Activated T-helper 1 cell treated with anti-CD3 and anti-CD28 coated beads, Interleukin-12 subunit alpha, Interleukin-12 subunit beta, Interleukin-2, Interleukin-4 antibody, amounts not matched to agents 30 ng/mL and 10 ng/mL and 1 ng/mL, durations not matched to agents 14 hours and 24 hours and 36 hours (primary cell): ENCODE measurements at regions of chr1 and their contacts with region 1.

Region 1: DNA sequence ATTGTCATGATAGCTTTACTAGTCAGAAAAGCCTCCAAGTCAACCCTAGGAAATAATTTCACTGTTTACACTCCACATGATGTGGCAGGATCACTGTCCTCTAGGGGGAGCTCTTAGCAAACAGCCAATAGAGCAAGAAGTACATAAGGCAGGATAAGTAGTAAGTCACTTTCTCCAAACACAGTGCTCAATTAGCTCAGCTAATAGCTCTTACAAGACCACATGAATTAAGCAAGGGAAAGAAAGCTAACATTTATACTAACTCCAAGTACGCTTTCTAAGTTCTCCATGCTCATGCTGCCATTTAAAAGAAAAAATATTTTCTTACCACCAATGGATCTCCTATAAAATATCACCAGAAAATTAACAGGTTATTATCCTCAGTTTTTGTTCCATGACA is 66.9 kb upstream of the LRIF1 start:
- DNase-seq: peak; percentile 49
- H3K4me3 Mint-ChIP-seq: no peak overlapping the region
- H3K27ac Mint-ChIP-seq: no peak overlapping the region
- H3K4me1 Mint-ChIP-seq: no peaks in the 10 kb centered on the region
- H3K27me3 Mint-ChIP-seq: peaks cover 18% of the 10 kb centered on the region

Region 2: GRCh38 chr1:110816930-110817329 is 213.7 kb before region 1 on chr1:
- intact Hi-C with region 1: no loop called
- DNase-seq: no peak
- H3K4me3 Mint-ChIP-seq: no peak overlapping the region
- H3K27ac Mint-ChIP-seq: no peak overlapping the region
- H3K4me1 Mint-ChIP-seq: no peaks in the 10 kb centered on the region
- H3K27me3 Mint-ChIP-seq: peaks cover 48% of the 10 kb centered on the region

Region 3: DNA sequence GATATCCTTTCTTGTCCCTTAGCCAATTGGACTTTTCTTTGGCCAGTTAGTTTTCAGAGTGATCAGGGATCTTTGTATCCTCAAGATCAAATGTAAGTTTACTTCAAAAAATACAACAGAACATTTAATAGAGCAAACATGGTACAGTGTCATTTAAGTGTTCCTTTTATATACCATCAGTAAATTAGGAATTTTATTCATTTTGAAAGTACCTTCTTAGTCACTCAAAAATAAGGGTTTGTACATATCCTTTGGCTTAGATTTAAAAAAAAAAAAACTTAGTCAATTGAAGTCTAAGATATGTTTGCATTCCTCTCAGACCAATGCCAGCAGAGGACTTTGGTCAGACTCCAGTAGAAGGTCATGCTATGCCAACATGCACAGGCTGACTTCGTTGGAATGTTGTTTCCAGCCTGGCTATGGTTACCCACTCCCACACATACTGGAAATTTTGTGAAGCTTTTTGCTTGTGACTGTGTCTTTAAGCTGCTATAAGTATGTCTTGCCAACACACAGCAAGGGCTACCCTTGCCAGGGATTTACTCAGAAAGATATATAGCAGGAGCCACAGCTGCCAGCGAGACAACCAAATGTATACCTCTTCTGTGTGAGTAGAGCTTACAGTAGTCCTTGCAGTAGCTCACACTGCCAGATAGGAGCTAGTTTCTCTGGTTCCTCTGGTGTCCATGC is 14.6 kb after region 1 on chr1:
- intact Hi-C with region 1: no loop called
- DNase-seq: no peak
- H3K4me3 Mint-ChIP-seq: no peak overlapping the region
- H3K27ac Mint-ChIP-seq: no peak overlapping the region
- H3K4me1 Mint-ChIP-seq: no peaks in the 10 kb centered on the region
- H3K27me3 Mint-ChIP-seq: peaks cover 26% of the 10 kb centered on the region

Region 4: DNA sequence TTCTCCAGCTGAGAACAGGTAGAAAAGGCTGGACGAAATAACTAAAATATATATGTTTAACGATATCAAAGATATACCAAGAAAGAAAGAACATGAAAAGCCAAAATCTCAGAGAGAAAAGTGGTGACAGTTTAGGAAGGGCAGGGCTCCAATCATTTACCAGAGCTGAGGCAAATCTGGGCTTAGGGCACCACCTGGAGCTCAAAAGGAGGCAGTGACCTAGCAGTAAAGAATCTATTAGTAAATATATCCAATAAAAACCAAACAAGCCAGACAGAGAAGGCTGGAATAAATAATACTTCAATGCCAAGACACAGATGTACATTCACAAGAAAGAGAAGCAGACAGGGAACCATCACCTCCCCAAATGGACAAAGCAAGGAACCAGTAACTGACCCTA is 303.6 kb after region 1 on chr1:
- intact Hi-C with region 1: loop called (anchors 1 kb)
- DNase-seq: peak; percentile 32
- H3K4me3 Mint-ChIP-seq: no peak overlapping the region
- H3K27ac Mint-ChIP-seq: no peak overlapping the region
- H3K4me1 Mint-ChIP-seq: peaks cover 5% of the 10 kb centered on the region
- H3K27me3 Mint-ChIP-seq: peaks cover 3% of the 10 kb centered on the region

Region 5: GRCh38 chr1:111769517-111770146 is 739.0 kb after region 1 on chr1:
- intact Hi-C with region 1: loop called (anchors 1 kb)
- DNase-seq: peak; percentile 14
- H3K4me3 Mint-ChIP-seq: no peak overlapping the region
- H3K27ac Mint-ChIP-seq: no peak overlapping the region
- H3K4me1 Mint-ChIP-seq: peaks cover 15% of the 10 kb centered on the region
- H3K27me3 Mint-ChIP-seq: no peaks in the 10 kb centered on the region